ENCODE measurements at regions of chr7 and their contacts with region 1.

Region 1: DNA sequence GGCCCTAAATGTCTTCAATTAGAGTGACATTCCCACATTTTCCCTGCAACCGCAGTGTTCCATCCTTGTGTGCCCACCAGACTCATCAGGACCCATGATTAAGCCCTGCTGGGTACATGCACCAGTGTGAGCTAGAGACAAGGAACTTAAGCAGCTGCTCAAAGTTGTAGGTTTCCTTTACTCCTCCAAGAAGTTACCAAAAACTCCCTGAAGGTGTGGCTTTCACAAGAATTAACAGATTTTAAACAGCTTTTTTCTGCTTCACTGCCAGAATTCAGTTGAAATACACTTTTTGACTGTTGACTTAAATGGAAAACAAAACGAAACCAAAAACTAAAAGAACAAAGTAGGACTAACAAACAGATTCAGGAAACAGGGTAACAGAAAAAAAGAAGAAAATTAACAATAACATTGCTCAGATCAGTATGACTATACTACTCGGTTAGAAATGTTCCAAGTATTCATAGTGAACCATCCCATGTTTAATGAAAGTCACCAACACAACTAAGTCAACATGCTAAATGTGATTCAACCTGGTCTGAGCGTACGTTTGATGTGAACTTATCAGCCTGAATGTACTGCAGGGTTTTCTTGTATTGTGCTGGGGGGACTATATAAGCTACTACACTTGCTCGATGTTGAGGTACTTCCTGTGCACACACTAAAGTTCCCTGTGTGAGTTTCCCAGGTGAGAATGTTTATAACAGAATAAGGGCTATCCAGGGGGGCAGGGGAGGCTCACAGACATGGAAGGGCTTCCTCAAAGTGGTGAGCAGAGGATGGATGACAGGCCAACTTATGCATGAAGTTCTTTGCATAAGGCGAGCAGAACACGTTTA is 22.2 kb downstream of the SLC37A3 start:
- DNase-seq: peak; percentile 40
- H3K4me3 Mint-ChIP-seq: peak overlapping the region; percentile 65
- H3K27ac Mint-ChIP-seq: peak overlapping the region; percentile 92
- H3K4me1 Mint-ChIP-seq: peaks cover 36% of the 10 kb centered on the region
- H3K27me3 Mint-ChIP-seq: no peaks in the 10 kb centered on the region

Region 2: GRCh38 chr7:140390466-140391190 is 14.5 kb after region 1 on chr7:
- CTCF ChIA-PET with region 1: interaction called, 23 read pairs
- POLR2A ChIA-PET with region 1: no interaction called
- DNase-seq: peak; percentile 14
- H3K4me3 Mint-ChIP-seq: no peak overlapping the region
- H3K27ac Mint-ChIP-seq: no peak overlapping the region
- H3K4me1 Mint-ChIP-seq: peaks cover 5% of the 10 kb centered on the region
- H3K27me3 Mint-ChIP-seq: no peaks in the 10 kb centered on the region